Tibial artery (tissue), 4 donors: ENCODE measurements at regions of chr9 and their contacts with region 1.

Region 1: DNA sequence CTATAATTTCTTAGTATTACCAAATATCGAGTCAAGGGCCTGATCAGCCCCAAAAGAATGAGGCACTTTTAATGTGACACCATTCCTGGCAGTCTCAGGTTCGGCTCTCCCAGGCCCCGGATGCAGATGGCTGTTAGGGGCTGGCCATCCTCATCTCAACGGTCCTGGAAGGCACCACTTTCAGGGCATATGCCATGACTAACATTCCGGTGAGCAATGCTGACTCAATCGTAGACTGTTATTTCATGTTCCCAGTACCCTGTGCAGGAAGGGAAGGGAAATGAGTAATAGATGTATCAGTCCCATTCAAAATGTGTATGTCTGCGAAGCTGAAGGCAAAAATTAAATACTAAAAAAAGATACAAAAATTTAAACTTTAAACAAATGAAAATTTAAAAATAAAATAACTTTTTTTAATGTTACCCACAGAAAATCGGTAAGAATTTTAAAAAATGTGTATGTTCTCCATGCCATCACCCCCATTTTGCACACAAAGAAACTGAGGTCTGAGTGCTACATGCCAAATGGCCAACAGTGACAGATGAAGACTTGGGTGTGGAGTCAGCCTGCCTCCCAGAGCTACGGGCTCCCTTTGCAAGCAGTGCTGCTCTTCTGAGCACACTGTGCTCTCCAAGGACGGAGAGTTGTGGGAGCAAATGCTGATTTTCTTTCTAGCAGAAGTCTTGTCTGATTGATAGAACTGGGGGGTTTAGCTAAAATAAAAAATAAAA is 79.0 kb downstream of the GLDC start:
- DNase-seq: peak in 1 of 2 donors; percentile 26
- H3K4me3 ChIP-seq: peak overlapping the region in 1 of 2 donors; percentile 6
- H3K27ac ChIP-seq: peak overlapping the region; percentile 43 to 69
- H3K4me1 ChIP-seq: peaks cover 0 to 42% (median 27%) of the 10 kb centered on the region in 4 donors
- H3K27me3 ChIP-seq: no peaks in the 10 kb centered on the region
- CTCF ChIP-seq: no peak

Region 2: DNA sequence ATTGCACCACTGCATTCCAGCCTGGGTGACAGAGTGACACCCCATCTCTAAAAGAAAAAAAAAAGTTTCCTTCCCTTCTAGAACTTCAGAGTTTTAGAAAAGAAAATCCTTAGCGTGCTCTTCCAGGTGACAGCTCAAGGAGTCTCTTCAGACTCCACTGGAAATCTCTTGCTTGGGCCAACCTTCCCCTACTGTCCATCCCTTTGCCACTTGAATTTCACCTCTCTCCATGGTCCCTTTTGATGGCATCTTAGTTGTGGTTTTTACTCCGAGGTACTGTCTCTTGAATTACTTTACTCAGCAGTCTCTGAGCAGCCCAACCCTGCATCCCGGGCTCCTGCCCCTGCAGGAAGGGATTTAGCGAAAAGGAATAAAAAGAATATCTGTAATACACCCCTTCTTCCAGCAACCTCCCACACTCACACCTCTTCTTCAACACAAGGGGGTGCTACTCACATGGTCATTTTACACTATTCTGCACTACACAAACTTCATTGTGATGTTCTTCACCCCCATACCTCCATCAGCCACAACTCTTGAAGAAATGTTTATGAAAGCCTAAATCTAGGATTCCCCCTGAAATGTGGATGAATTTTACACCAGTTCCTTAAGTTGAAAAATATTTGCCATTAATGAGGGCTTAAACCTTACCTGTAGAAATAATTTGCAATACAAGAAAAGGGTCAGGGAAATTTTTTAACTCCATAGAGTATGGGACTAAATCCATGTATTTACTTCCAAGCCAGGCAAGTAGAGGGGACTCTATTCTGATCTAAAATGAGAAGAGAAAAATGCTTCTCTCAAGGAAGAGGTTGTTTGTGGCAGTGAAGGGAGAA is 212.5 kb before region 1 on chr9:
- intact Hi-C with region 1: loop called (anchors 5 kb)
- DNase-seq: no peak
- H3K4me3 ChIP-seq: no peak overlapping the region
- H3K27ac ChIP-seq: no peak overlapping the region
- H3K4me1 ChIP-seq: no peaks in the 10 kb centered on the region
- H3K27me3 ChIP-seq: no peaks in the 10 kb centered on the region
- CTCF ChIP-seq: peak; percentile 69 to 72